Sigmoid colon (tissue), 7 donors: ENCODE measurements at regions of chr12 and their contacts with region 1.

Region 1: GRCh38 chr12:12327802-12328201 is 22.2 kb downstream of the MANSC1 start:
- DNase-seq: no peak
- H3K4me3 ChIP-seq: no peak overlapping the region
- H3K27ac ChIP-seq: peak overlapping the region in 2 of 4 donors; percentile 17 to 37
- H3K4me1 ChIP-seq: no peaks in the 10 kb centered on the region
- H3K27me3 ChIP-seq: no peaks in the 10 kb centered on the region
- CTCF ChIP-seq: peak in 3 of 4 experiments; percentile 55 to 70 (median 56)
- EP300 ChIP-seq: no peak
- POLR2A ChIP-seq: no peak

Region 2: DNA sequence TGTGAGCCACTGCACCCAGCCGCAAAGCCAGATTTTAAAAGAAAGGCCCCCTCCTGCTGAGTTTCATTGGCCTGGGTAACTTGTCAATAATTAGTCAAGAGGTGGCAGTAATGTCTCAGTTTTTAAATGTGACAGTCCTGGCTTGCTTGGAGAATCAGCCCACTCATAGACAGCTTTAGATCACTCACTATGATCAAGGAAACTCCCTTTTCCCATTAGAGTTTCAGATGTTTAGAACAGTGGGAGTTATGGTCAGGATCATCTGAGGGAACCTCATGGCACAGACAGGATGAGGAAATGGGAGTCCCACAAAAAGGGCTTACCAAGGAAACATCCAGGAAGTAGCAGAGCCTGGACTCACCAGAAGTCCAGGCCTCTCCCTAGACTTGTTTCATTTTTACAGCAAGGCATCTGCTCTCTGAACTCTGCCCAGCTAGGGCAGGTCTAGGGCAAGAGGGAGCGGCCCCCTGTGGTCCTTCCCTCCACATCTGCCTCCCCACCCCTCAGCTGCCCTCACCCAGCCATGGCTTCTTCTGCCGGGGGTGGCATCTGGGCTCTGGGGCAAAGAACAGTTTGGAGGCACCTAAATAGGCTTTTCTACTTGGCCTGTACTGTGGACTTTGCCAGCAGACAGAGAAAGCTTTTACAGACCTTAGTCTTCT is 245.8 kb before region 1 on chr12:
- intact Hi-C with region 1: loop called (anchors 2 kb)
- DNase-seq: no peak
- H3K4me3 ChIP-seq: no peak overlapping the region
- H3K27ac ChIP-seq: peak overlapping the region in 2 of 4 donors; percentile 7 to 27
- H3K4me1 ChIP-seq: no peaks in the 10 kb centered on the region
- H3K27me3 ChIP-seq: no peaks in the 10 kb centered on the region
- CTCF ChIP-seq: no peak
- EP300 ChIP-seq: no peak
- POLR2A ChIP-seq: no peak

Region 3: DNA sequence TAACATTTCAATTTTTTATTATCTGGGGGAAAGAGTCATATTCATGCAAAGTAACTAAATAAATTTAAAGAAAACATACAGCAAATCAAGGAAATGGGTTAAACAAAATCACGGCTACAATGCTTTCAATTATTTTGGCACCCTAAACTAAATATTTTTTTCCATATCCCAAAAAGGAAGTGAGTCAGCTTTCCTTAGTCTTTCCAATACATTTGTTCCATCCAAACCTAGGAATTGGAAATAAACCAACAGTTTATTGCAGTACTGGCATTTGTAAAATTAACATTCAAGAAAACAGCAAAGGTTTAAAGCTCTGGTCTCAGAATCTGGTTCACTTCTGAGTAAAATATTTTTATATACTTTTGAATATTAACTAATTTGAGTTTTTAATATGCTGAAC is 167.8 kb before region 1 on chr12:
- intact Hi-C with region 1: loop called (anchors 10 kb)
- DNase-seq: no peak
- H3K4me3 ChIP-seq: no peak overlapping the region
- H3K27ac ChIP-seq: peak overlapping the region in 2 of 4 donors; percentile 34 to 46
- H3K4me1 ChIP-seq: peaks cover 0 to 34% (median 25%) of the 10 kb centered on the region in 4 donors
- H3K27me3 ChIP-seq: no peaks in the 10 kb centered on the region
- CTCF ChIP-seq: no peak
- EP300 ChIP-seq: no peak
- POLR2A ChIP-seq: no peak